ENCODE measurements at regions of chr15 and their contacts with region 1.

Region 1: DNA sequence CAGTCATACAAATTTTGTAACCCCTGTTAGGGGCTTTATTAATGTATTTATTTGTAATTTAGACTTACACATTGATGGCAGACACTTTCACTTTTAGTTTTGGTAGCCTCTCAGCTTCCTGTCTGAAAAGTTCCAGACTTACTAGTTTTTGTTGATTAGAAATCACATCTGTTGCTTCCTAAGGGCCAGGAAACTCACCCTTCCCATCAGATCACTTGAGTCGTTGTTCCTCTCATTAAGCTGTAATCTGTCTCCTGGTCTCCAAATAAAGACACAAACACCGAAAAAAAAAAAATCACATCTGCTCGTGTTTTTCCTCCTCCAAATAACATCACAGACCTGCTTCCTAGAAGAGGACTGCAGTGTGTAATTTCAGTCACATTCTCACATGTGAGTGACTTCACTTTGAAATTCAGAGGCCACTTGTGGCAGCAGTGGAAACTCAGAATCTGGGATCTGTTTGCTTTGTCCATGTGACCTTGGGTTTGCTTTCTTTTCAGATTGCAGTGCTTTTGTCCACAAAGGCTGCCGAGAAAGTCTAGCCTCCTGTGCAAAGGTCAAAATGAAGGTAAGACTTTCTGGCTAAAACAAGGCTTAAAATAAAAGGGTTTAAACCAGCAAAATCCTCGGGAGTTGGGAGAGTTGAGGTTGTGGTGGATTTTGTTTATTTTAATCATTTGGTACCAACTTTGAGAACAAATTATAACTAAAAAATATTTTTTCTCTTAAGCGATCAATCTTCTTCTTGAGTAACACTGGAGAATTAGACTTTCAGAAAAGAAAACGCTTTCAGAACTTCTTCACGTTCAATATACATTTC is 87.0 kb downstream of the KLHL25 start:
- DNase-seq: no peak
- H3K4me3 ChIP-seq: peak overlapping the region in 1 of 2 donors; percentile 35
- H3K27ac ChIP-seq: peak overlapping the region; percentile 85 to 90
- H3K4me1 ChIP-seq: peaks cover 9 to 37% of the 10 kb centered on the region in 2 donors
- H3K27me3 ChIP-seq: no peaks in the 10 kb centered on the region
- CTCF ChIP-seq: no peak

Region 2: GRCh38 chr15:85624291-85624801 is 83.4 kb before region 1 on chr15:
- intact Hi-C with region 1: loop called (anchors 5 kb)
- DNase-seq: no peak
- H3K4me3 ChIP-seq: peak overlapping the region; percentile 18 to 74
- H3K27ac ChIP-seq: peak overlapping the region; percentile 85 to 86
- H3K4me1 ChIP-seq: peaks cover 3 to 31% of the 10 kb centered on the region in 2 donors
- H3K27me3 ChIP-seq: no peaks in the 10 kb centered on the region
- CTCF ChIP-seq: no peak

Region 3: GRCh38 chr15:85667491-85668424 is 40.0 kb before region 1 on chr15:
- intact Hi-C with region 1: loop called (anchors 5 kb)
- DNase-seq: peak in 1 of 2 donors; percentile 87
- H3K4me3 ChIP-seq: peak overlapping the region in 1 of 2 donors; percentile 28
- H3K27ac ChIP-seq: peak overlapping the region; percentile 92 to 93
- H3K4me1 ChIP-seq: peaks cover 15 to 23% of the 10 kb centered on the region in 2 donors
- H3K27me3 ChIP-seq: no peaks in the 10 kb centered on the region
- CTCF ChIP-seq: no peak